ENCODE measurements at regions of chr6 and their contacts with region 1.

Region 1: DNA sequence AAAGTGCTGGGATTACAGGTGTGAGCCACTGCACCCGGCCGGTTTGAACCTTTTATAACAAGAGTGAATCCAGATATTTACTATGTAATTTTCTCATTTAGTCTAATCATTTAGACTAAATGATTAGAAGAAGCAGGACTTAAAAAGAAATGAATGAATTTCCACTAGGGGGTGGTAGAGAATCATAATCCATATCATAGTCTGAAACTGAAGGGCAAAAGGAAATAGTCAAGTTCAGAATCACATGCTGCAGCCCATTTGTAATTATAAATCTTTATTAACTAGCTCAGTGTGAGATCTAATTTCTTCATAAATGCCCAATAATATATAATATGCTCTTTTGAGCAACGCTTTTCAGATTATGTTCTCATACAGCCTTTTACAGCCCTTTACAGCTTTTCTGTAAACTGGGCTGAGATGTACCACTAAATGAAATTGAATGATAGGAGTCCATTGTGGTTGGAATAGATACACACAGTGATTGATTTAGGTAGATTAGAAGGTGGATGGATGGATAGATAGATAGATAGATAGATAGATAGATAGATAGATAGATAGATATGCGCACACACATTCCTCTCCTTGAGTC is 31.8 kb downstream of the PSMB9 start:
- DNase-seq: no peak
- H3K4me3 Mint-ChIP-seq: no peak overlapping the region
- H3K27ac Mint-ChIP-seq: no peak overlapping the region
- H3K4me1 Mint-ChIP-seq: peaks cover 6% of the 10 kb centered on the region
- H3K27me3 Mint-ChIP-seq: peaks cover 5% of the 10 kb centered on the region

Region 2: GRCh38 chr6:32933636-32934085 is 47.9 kb after region 1 on chr6:
- intact Hi-C with region 1: loop called (anchors 5 kb)
- DNase-seq: peak; percentile 93
- H3K4me3 Mint-ChIP-seq: no peak overlapping the region
- H3K27ac Mint-ChIP-seq: no peak overlapping the region
- H3K4me1 Mint-ChIP-seq: peaks cover 5% of the 10 kb centered on the region
- H3K27me3 Mint-ChIP-seq: peaks cover 26% of the 10 kb centered on the region

Region 3: GRCh38 chr6:32984605-32985389 is 99.0 kb after region 1 on chr6:
- intact Hi-C with region 1: loop called (anchors 1 kb)
- DNase-seq: peak; percentile 96
- H3K4me3 Mint-ChIP-seq: no peak overlapping the region
- H3K27ac Mint-ChIP-seq: peak overlapping the region; percentile 22
- H3K4me1 Mint-ChIP-seq: peaks cover 16% of the 10 kb centered on the region
- H3K27me3 Mint-ChIP-seq: peaks cover 4% of the 10 kb centered on the region

Region 4: GRCh38 chr6:33075568-33076405 is 190.0 kb after region 1 on chr6 and contains the start of gene HLA-DPB1:
- intact Hi-C with region 1: loop called (anchors 5 kb)
- DNase-seq: peak; percentile 85
- H3K4me3 Mint-ChIP-seq: peak within 1 kb of the TSS; percentile 80
- H3K27ac Mint-ChIP-seq: peak within 1 kb of the TSS; percentile 79
- H3K4me1 Mint-ChIP-seq: peaks cover 48% of the 10 kb centered on the region
- H3K27me3 Mint-ChIP-seq: peaks cover 2% of the 10 kb centered on the region
- total RNA-seq, gene HLA-DPB1: 4.7 and 6.2 TPM in 2 replicates

Measured in activated CD4-positive, alpha-beta T cell treated with anti-CD3 and anti-CD28 coated beads, Interleukin-2, amount 10 ng/mL, durations not matched to agents 24 days and 14 days (primary cell).